Psoas muscle (tissue), 8 donors: ENCODE measurements at regions of chr13 and their contacts with region 1.

Region 1: GRCh38 chr13:31161828-31162590 is at the start of gene HSPH1:
- DNase-seq: peak; percentile 99 to 100
- ATAC-seq: peak; percentile 95 to 96 (median 96)
- H3K4me3 ChIP-seq: peak within 1 kb of the TSS; percentile 94
- H3K27ac ChIP-seq: peak within 1 kb of the TSS; percentile 92
- H3K4me1 ChIP-seq: peaks cover 30% of the 10 kb centered on the region
- H3K27me3 ChIP-seq: no peaks in the 10 kb centered on the region
- CTCF ChIP-seq: peak; percentile 12
- total RNA-seq, gene HSPH1: 66.8 to 103 (median 76.3) TPM

Region 2: GRCh38 chr13:31199849-31200636 is 38.0 kb after region 1 on chr13 and contains the start of gene B3GLCT:
- intact Hi-C with region 1: loop called in 1 of 2 experiments (anchors 2 kb)
- DNase-seq: peak; percentile 81 to 88
- ATAC-seq: peak; percentile 90 to 94 (median 92)
- H3K4me3 ChIP-seq: peak within 1 kb of the TSS; percentile 66
- H3K27ac ChIP-seq: peak within 1 kb of the TSS; percentile 96
- H3K4me1 ChIP-seq: peaks cover 9% of the 10 kb centered on the region
- H3K27me3 ChIP-seq: no peaks in the 10 kb centered on the region
- CTCF ChIP-seq: peak; percentile 88
- total RNA-seq, gene B3GLCT: 1.1 to 5.5 (median 2.9) TPM